HEK293 (cell line): ENCODE measurements at regions of chr9 and their contacts with region 1.

Region 1: GRCh38 chr9:122125158-122125508 is 32.0 kb upstream of the TTLL11 start:
- H3K4me3 ChIP-seq: no peak overlapping the region
- H3K27ac ChIP-seq: no peak overlapping the region
- H3K4me1 ChIP-seq: no peaks in the 10 kb centered on the region
- CTCF ChIP-seq: peak; percentile 75

Region 2: GRCh38 chr9:122107291-122107805 is 17.8 kb before region 1 on chr9:
- CTCF ChIA-PET with region 1: interaction called, 59 read pairs
- POLR2A ChIA-PET with region 1: no interaction called
- H3K4me3 ChIP-seq: no peak overlapping the region
- H3K27ac ChIP-seq: no peak overlapping the region
- H3K4me1 ChIP-seq: no peaks in the 10 kb centered on the region
- CTCF ChIP-seq: no peak

Region 3: DNA sequence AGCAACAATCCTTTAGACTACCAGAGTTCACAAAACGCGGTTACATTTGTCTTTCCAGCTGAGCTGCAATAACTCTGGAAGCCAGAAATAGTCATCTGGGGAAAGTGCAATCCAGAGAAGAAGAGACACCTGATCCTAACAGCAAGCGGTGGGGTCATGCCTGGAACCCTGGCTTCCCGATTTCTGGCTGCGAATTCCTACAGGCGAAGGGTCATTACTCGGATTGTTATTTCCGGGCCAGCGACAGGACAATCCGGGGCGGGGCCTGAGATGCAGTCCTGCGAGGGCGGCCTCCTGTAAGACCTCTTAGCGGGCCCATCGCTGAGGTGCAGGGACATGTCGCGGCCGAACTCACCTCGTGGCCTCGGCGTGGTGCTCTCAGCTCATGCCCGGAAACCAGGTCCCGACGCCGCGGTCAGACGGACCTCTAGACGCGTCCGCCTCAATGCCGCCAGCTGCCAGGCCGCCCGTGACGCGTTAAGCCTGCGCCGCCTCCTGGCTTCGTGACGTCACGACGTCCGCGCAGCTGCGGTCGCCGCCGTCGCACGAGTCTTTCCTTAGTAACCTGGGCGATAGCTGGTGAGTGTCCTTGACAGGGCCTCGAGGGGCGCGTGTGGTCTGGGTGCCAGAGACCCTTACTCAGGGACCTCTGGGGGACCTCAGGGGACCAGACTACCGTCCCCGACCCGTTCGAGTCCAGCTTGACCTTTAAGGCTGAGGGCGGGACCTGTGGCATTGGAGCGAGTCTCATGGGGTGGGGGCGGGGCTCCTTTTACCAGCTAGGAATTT is 139.4 kb after region 1 on chr9 and contains the starts of genes MRRF and RBM18:
- CTCF ChIA-PET with region 1: interaction called, 19 read pairs
- POLR2A ChIA-PET with region 1: no interaction called
- H3K4me3 ChIP-seq: peak within 1 kb of the TSS; percentile 89
- H3K27ac ChIP-seq: peak within 1 kb of the TSS; percentile 56; the same call in 1 of the 2 replicates
- H3K4me1 ChIP-seq: peaks cover 4% of the 10 kb centered on the region
- CTCF ChIP-seq: no peak

Region 4: DNA sequence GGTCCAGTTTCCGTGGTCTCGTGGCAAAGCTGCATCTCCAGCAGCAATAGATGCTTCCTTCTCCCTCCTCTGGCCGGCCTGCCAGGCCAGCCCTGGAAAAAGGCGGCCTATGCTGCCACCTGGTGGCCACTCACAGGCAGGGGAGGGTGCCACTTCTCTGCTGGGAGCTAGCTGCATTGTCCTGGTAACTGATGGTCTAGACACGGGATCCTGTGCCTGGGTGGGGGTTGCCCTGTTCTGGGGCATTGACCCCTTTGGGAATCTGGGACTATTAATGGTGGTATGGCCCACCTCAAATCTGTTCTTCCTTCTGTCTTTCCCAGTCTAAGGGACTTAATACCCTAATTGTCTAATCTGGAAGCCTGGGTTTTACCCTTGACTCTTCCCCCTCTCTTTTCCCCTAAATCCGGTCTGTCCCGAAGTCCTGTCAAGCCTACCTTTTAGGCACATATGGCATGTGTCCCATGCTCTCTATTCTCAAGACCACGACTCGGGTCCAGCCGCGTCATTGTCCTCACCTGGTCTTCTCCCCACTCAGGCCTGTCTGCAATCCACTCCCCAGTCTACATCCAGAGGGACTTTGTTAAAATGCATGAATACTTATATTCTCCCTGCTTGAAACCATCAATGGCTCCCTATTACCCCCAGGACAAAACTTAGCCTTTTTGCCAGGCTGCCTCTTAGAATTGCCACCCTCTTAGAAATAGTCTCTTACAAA is 225.7 kb after region 1 on chr9:
- CTCF ChIA-PET with region 1: interaction called, 473 read pairs
- POLR2A ChIA-PET with region 1: interaction called, 10 read pairs
- H3K4me3 ChIP-seq: no peak overlapping the region
- H3K27ac ChIP-seq: no peak overlapping the region
- H3K4me1 ChIP-seq: no peaks in the 10 kb centered on the region
- CTCF ChIP-seq: peak; percentile 90